Mucosa of descending colon (tissue), 3 donors: ENCODE measurements at regions of chr15 and their contacts with region 1.

Region 1: DNA sequence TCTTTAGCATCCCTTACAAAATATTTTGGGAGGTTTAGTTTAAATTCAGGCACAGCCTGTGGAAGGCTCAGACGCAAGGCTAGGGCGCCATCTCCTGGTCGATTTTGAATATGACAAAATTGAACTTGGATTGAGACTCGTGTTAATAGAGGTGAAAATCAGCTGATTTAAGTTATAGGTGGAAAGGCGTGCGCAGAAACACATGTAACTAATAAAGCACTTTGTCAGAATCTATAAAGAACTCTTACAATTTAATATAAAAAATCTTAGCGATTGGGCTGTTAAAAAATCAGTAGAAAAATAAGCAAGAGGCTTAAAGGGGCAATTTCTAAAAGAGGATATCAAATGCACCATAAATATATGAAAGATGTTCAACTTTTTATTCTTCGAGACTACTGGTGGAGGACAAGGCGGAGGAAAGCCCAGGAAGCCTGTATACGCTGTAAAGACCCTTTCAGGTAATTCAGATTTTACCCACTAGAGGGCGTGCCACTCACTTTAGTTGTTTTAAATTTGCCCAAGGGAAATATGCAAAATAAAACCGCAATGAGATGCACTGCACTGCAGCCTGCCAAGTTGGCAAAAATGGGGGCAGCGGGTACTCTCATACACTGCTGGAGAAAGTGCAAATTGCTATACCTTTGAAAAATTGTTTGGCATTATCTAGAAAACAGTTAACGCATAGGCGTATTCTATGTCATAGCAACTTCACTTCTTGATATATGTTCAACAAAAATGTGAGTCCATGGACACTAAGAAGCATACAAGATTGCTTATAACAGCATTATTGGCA is 64.7 kb downstream of the SLC30A4 start:
- DNase-seq: peak in 1 of 3 donors; percentile 95
- ATAC-seq: peak; percentile 76
- H3K4me3 ChIP-seq: no peak overlapping the region
- H3K4me1 ChIP-seq: peaks cover 28% of the 10 kb centered on the region
- CTCF ChIP-seq: peak; percentile 67

Region 2: GRCh38 chr15:45307230-45307924 is 150.5 kb before region 1 on chr15:
- intact Hi-C with region 1: loop called in 1 of 2 experiments (anchors 5 kb)
- DNase-seq: peak in 1 of 3 donors; percentile 33
- ATAC-seq: peak; percentile 76
- H3K4me3 ChIP-seq: no peak overlapping the region
- H3K4me1 ChIP-seq: no peaks in the 10 kb centered on the region
- CTCF ChIP-seq: peak; percentile 32

Region 3: GRCh38 chr15:45611305-45611704 is 153.5 kb after region 1 on chr15:
- intact Hi-C with region 1: loop called in 1 of 2 experiments (anchors 5 kb)
- DNase-seq: no peak
- ATAC-seq: no peak
- H3K4me3 ChIP-seq: no peak overlapping the region
- H3K4me1 ChIP-seq: no peaks in the 10 kb centered on the region
- CTCF ChIP-seq: no peak